BJ (cell line): ENCODE measurements at regions of chr20 and their contacts with region 1.

Region 1: DNA sequence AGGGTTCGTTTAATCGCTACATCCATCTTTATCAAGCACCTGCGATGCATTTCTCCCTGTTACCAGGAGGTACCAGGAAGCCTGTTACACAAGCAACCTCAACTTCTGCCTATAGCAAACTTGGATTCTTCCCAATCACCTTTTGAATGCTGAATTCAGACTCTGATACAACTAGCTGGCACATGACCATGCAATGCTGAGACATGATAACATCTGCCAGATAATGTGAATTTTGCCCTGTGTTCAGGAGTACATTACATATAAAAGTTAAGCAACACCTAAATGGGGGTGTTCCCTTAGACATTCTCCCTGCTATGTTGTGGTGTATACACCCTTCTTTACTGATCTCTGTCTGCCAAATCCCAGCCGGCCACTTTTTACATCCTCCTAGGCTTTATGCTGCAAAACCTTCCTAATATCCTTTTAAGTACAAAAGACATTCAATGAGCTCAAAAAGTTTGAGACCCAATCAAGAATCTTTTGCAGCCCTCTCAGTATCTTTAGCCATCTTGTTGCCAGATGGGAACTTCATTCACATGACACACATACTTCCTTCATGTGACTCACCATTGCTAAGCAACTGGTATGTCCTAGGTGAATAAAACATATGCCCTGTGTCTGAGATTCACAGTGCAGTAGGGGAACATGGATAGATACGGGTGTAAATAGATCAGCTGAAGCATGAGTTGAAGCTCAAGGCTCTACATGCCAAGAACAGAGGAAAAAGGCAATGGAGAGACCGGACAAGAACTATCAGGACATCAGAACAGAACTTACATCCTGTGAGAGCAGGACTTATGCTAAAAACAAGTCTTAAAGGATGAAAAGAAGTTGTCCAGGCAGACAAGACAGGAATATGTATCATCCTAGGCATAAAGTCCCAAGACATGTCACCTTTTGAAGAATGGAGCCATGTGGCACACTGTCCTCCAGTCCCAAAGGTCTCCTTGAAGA is 84.3 kb downstream of the ZHX3 start:
- DNase-seq: peak; percentile 81
- H3K4me3 ChIP-seq: no peak overlapping the region
- H3K27me3 ChIP-seq: no peaks in the 10 kb centered on the region
- CTCF ChIP-seq: no peak

Region 2: DNA sequence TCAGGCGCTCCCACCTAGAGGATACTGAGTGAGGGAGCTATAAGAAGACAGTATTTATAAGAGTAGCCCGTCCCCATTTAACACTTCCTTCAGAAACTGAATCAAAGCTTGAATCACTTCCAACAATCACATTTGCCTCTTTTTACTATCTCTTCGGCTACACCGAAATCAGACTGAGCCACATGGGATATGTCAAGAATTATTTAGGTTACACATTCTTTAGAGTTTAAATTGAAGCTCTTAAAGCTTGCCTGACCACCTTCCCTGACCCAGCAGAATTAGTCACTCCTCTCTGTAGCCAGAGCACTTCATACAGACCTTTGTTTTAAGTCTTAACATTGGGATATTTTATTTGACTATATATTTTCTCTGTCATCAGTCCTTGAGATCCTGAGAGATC is 707.9 kb before region 1 on chr20:
- CTCF ChIA-PET with region 1: no interaction called
- POLR2A ChIA-PET with region 1: no interaction called
- DNase-seq: no peak
- H3K4me3 ChIP-seq: no peak overlapping the region
- H3K27me3 ChIP-seq: no peaks in the 10 kb centered on the region
- CTCF ChIP-seq: no peak

Region 3: DNA sequence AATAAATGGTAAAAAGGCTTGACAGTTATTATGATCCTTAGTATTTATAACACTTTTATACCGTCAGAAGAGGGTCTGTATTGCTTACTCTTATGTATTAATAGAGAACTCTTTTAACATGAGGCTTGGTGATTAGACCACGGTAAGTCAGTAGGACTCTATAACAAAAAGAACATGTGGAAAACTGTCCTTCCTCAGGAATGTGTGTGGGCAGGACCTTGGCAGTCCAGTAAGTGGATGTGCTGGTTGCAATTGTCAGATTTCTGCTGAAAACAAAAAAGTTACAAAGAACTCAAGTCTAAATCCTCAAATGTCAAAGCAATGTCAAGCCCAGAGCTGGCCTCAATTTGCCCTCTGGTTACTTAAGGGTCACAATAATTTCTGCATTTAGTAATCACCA is 14.8 kb before region 1 on chr20:
- CTCF ChIA-PET with region 1: interaction called, 17 read pairs
- POLR2A ChIA-PET with region 1: interaction called, 3 read pairs
- DNase-seq: peak; percentile 38
- H3K4me3 ChIP-seq: no peak overlapping the region
- H3K27me3 ChIP-seq: no peaks in the 10 kb centered on the region
- CTCF ChIP-seq: no peak